ENCODE measurements at regions of chr1 and their contacts with region 1.

Region 1: DNA sequence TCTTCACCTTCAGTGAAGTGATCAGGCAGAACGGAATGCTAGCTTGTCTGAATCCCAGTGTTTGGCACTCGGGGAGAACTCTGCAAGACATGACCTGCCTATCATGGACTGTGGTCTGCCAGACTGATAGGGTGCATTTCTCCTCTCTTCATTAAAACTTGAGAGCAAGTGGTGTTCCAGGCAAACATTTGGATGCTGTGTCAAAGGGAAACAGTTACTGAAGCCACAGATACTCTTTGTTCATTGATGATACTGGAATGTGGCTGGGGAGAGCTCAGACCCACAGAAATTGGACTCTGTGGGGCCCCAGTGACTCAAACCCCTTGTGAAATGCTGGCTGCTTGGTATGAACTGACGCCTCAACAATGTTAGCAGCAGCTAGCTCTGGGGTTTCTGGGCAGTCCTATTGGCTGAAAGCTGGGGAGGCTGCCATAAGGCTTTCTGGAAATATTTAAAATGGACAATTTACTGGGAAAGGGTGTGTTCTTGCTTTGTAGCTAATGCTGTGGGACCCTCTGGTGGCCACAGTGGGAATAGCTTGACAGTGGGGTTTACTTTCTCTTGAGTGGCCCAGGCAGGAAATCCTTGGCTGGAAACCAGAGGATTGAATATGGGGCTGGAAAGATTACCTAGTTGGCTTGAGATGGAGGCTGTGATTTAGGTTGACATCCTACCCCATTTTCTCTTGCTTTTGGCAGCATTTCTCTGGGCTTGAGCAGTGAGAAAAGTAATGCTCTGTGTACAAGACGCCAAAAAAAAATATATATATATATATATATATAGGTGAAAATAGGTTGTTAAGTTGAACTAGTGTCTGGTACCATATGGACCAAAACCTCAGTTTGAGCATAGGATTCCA is 8.0 kb upstream of the S100A10 start:
- DNase-seq: peak; percentile 96
- H3K4me3 ChIP-seq: no peak overlapping the region
- CTCF ChIP-seq: peak; percentile 80

Region 2: GRCh38 chr1:151909150-151910149 is 92.2 kb before region 1 on chr1 and contains the start of gene THEM4:
- CTCF ChIA-PET with region 1: interaction called, 33 read pairs
- POLR2A ChIA-PET with region 1: interaction called, 7 read pairs
- DNase-seq: peak; percentile 71
- H3K4me3 ChIP-seq: peak within 1 kb of the TSS; percentile 73
- CTCF ChIP-seq: peak; percentile 46

Region 3: DNA sequence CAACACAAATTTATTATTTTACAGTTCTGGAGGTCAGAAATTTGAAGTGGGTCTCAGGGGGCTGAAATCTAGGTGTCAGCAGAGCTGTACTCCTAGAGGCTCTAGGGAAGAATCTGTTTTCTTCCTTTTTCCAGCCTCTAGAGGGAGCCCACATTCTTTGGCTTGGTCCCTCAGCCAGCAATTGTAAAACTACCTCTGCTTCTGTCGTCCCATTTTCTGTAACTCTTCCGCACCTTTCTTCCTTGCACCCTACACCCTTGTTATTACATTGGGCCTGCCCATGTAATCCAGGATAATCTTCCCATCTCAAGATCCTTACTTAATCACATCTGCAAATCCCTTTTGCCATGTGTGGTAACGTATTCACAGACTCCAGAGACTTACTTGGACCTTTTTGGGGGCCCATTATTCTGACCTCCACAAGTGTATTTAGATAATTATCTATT is 67.5 kb before region 1 on chr1:
- CTCF ChIA-PET with region 1: interaction called, 605 read pairs
- POLR2A ChIA-PET with region 1: no interaction called
- DNase-seq: no peak
- H3K4me3 ChIP-seq: no peak overlapping the region
- CTCF ChIP-seq: peak; percentile 75

Region 4: DNA sequence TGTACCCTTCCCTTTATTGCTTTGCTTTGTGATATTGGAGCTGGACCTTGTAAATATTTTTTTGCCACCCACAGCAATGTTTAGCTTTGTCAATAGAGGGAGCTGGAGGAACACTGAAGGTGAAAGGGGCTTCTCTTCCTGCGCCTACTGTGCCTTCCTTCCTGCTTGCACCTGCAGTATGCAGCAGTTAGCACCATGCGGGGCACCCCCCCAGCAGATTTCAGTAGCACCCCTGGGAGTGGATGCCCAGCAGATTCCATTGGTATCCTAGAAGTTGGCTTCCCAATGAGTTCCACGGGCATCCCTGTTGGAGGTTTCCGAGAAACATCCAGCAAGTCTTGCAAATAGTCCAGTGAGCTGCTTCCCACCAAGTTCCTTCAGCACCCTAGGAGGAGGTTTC is 33.6 kb before region 1 on chr1:
- CTCF ChIA-PET with region 1: interaction called, 370 read pairs
- POLR2A ChIA-PET with region 1: interaction called, 3 read pairs
- DNase-seq: no peak
- H3K4me3 ChIP-seq: no peak overlapping the region
- CTCF ChIP-seq: peak; percentile 66

Region 5: GRCh38 chr1:152013664-152014237 is 12.1 kb after region 1 on chr1:
- CTCF ChIA-PET with region 1: interaction called, 157 read pairs
- POLR2A ChIA-PET with region 1: no interaction called
- DNase-seq: no peak
- H3K4me3 ChIP-seq: no peak overlapping the region
- CTCF ChIP-seq: peak; percentile 76

Region 6: DNA sequence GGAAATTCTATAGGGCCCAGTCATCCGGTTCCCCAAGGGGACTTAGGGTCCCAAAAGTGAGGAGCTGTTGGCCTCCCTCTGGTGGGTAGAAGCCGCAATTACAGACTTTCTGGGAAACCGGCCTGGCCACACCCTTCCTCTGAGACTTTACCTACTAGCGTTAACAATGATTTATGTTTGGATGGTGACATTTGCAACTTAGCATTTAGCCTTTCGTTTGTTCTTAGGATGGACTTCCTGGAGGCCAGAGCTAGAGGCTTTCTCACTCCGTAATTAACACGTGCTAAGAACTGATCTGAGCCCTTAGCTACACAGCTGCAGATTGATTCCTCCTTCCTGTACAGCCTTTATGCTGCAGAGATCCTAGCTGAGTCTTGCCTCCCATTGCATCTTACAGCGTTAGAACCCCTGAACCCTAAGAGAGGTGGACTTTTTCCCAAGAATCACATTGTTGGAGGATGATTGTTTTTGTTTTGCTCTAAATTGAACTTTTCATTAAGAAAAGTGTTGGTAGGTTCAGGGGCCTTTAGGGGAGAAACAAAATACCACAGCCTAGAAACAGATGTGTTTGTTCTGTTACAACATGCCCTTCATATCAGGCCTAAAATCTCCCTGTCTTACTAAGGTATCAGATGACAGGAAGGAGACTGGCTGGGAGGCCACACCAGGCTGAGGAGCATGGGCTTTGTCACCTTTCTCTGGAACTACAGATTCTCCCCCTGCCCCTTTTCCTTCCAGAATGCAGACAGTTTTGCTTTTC is 33.2 kb after region 1 on chr1:
- CTCF ChIA-PET with region 1: interaction called, 36 read pairs
- POLR2A ChIA-PET with region 1: interaction called, 3 read pairs
- DNase-seq: no peak
- H3K4me3 ChIP-seq: peak overlapping the region; percentile 82
- CTCF ChIP-seq: peak; percentile 58

Measured in AG04449 (cell line).